Sigmoid colon (tissue), 7 donors: ENCODE measurements at regions of chr21 and their contacts with region 1.

Region 1: DNA sequence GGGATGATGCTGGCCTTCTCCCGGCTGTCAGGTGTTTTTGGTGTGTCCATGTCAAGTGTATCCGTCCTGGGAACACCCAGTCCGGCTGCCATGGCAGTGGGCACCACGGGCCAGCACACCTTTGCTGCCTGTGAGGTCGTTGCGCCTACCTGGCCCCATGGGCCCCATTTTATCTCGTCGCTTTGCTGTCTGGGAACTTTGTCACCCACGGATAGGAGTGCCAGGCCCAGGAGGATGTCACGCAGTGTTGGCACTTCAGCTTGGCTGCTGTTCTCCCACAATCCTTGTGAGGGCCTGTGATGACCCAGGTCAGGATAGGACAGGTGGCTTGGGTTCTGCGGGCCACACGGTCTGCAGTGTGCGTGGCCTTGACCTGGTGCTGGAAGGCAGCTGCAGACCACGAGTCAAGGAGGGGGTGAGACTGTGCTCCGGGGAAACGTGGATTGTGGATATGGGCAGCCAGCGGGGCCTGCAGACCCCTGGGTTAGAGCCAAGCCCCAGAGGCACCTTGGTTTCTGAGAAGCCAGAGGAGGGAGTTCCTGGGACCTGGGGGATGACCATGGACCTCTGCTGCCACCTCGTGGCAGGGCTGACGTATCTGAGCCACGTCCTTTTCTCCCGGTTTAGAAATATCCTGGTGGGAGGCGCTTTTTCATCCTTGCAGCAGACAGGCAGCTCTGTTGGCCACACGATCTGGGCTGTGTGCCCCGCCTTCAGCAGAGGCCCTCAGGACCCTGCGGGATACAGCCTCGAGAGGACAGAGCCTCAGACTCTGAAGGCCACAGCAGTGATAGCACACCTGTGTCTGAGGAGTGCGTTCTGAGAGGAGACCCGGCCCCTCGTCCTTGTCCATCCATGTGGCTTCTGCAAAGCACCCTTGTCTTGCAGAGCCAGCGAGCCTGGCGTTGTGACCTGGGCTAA is 161.1 kb upstream of the COL6A1 start:
- DNase-seq: peak; percentile 89
- H3K4me3 ChIP-seq: no peak overlapping the region
- H3K27ac ChIP-seq: no peak overlapping the region
- H3K4me1 ChIP-seq: peaks cover 0 to 15% (median 5%) of the 10 kb centered on the region in 4 donors
- H3K27me3 ChIP-seq: peaks cover 0 to 4% (median 0%) of the 10 kb centered on the region in 3 donors
- CTCF ChIP-seq: peak; percentile 76 to 94 (median 84)
- EP300 ChIP-seq: no peak
- POLR2A ChIP-seq: no peak

Region 2: GRCh38 chr21:45478115-45478801 is 342.2 kb before region 1 on chr21:
- intact Hi-C with region 1: loop called (anchors 1 kb)
- DNase-seq: peak; percentile 87
- H3K4me3 ChIP-seq: peak overlapping the region; percentile 1 to 29 (median 10)
- H3K27ac ChIP-seq: peak overlapping the region; percentile 32 to 49 (median 42)
- H3K4me1 ChIP-seq: peaks cover 4 to 17% (median 13%) of the 10 kb centered on the region in 4 donors
- H3K27me3 ChIP-seq: no peaks in the 10 kb centered on the region
- CTCF ChIP-seq: peak; percentile 69 to 88 (median 82)
- EP300 ChIP-seq: no peak
- POLR2A ChIP-seq: no peak

Region 3: GRCh38 chr21:45542242-45542666 is 278.2 kb before region 1 on chr21 and contains the start of gene SLC19A1:
- intact Hi-C with region 1: loop called (anchors 5 kb)
- DNase-seq: peak; percentile 77
- H3K4me3 ChIP-seq: peak within 1 kb of the TSS; percentile 54 to 89 (median 74)
- H3K27ac ChIP-seq: peak within 1 kb of the TSS; percentile 59 to 80 (median 74)
- H3K4me1 ChIP-seq: peaks cover 0 to 25% (median 19%) of the 10 kb centered on the region in 4 donors
- H3K27me3 ChIP-seq: no peaks in the 10 kb centered on the region
- CTCF ChIP-seq: peak in 1 of 4 experiments; percentile 55
- EP300 ChIP-seq: no peak
- POLR2A ChIP-seq: no peak
- total RNA-seq, gene SLC19A1: 2.1 to 6.4 (median 2.5) TPM

Region 4: DNA sequence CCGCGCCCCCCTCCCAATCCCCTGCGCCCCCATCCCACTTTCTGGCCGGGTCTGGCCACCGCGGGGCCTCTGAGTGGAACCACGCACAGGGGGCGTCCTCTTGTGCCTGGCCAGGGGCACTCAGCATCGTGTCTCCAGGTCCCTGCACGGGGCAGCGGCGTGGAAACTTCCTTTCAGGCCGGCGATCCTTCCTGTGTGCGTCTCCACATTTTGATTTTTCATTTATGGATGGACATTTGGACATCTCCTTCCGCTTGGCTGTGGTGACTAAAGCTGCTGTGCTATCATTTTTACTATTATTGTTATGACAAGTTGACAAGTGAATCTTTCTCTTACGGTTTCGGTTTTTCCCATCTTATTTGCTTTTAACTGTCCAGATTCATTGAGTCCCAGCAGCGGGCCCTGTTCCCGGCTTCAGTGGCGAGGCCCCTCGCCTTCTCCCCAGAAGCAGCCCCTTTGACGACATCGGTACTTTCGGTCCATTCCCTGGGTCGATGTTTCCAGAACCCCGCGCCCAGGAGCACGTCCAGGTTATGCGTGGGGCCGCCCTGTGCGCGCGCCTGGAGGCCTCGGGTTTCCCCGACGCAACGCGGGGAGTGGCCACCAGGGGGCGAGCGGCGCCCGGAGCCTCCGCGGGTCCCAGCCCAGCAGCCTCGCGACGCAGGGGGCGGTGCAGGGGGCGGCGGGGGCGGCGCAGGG is 265.8 kb before region 1 on chr21:
- intact Hi-C with region 1: loop called (anchors 1 kb)
- DNase-seq: peak; percentile 91
- H3K4me3 ChIP-seq: peak overlapping the region; percentile 47 to 62 (median 58)
- H3K27ac ChIP-seq: peak overlapping the region; percentile 70 to 79 (median 78)
- H3K4me1 ChIP-seq: peaks cover 0 to 12% (median 11%) of the 10 kb centered on the region in 4 donors
- H3K27me3 ChIP-seq: no peaks in the 10 kb centered on the region
- CTCF ChIP-seq: peak; percentile 64 to 86 (median 78)
- EP300 ChIP-seq: no peak
- POLR2A ChIP-seq: no peak

Region 5: DNA sequence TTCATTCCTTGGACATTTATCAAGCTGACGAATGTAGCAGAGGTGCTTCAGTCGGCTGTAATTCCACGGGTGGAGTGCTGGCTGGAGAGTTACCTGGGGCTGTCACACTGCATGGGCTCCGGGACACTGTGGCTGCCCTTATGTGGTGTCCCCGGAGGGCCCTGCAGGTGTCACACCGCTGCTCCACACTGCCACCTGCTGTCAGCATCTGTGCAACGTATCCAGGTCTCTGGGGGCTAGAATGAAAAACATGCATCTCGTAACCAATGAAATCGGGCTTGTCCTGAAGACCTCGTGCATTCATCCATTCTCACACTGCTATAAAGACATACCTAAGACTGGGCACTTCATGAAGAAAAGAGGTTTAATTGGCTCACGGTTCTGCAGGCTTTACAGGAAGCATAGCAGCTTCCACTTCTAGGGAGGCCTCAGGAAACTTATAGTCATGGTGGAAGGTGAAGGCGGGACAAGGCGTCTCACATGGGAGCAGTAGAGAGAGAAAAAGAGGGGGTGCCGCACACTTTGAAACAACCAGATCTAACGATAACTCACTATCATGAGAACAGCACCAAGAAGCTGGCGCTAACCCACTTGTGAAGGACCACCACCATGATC is 223.6 kb before region 1 on chr21:
- intact Hi-C with region 1: loop called (anchors 5 kb)
- DNase-seq: peak; percentile 85
- H3K4me3 ChIP-seq: no peak overlapping the region
- H3K27ac ChIP-seq: no peak overlapping the region
- H3K4me1 ChIP-seq: peaks cover 0 to 5% (median 0%) of the 10 kb centered on the region in 4 donors
- H3K27me3 ChIP-seq: no peaks in the 10 kb centered on the region
- CTCF ChIP-seq: peak; percentile 86 to 93 (median 90)
- EP300 ChIP-seq: no peak
- POLR2A ChIP-seq: no peak